AG04450 (cell line): ENCODE measurements at regions of chr1 and their contacts with region 1.

Region 1: DNA sequence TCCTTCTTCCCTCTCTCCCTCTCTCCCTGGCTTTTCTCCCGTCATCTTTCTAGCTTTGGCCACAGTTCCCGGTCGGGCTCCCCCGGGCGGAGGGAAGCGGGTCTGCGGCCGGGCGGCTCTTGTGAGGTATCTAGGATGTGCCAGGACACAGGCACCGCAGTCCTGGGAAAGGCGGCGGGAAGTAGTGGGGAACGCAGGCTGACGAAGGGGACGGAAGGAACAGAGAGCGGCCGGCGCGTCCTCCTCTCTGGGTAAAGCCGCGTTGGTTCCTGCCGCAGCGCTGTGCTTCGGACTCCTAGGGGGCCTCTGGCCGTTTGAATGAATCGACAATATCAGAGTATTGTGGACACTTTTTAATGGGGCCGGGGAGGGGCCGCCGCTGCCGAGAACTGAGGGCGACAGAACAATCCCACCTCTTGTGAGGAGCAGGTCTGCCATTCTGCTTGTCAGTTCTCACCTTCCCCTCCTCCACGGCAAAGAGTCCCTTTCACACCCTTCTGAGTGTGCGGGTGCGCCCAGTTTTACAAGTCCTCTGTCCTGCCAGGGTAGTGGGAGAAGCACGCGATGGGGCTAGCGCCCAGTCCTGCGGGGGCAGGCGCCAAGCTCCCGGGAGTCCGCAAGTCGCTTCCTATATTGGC is 1.2 kb upstream of the LHX9 start:
- DNase-seq: no peak
- H3K4me3 ChIP-seq: peak overlapping the region; percentile 47
- H3K27ac ChIP-seq: no peak overlapping the region
- H3K27me3 ChIP-seq: peaks cover 98% of the 10 kb centered on the region
- CTCF ChIP-seq: peak; percentile 76

Region 2: DNA sequence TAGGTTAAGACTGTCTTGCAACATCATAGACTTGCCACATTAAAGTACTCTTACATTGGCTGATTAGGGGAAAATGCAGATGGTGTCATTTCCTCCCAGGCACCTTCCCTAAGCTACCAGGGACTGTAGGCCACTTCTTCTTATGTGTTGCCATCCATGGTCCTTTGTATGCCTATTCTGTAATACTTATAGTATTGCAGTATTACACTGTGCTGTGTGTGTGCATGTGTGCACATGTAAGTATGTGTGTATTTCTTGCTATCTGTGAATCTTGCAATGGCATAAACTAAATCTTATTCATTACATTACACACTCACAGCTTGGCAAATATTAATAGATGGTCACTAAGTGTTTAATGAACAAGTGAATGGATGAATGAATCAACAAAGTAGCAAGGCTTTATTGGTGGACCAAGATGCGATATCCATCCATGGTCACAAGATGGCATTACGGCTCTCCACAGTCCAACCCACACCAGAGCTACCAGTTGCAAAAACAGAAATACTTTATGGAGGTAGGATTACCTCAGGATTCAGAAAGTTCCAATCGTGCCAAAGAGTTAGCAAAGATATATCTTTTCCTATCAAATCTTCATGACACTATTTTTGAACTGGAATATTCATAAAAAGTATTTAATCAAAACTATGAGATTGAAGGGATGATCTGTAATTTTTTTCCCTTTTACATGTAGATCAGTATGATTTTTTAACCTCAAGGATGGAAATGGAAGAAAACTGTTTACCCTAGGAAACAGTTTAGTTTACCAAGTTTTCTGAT is 300.9 kb before region 1 on chr1:
- CTCF ChIA-PET with region 1: interaction called, 38 read pairs
- POLR2A ChIA-PET with region 1: no interaction called
- DNase-seq: peak; percentile 15
- H3K4me3 ChIP-seq: no peak overlapping the region
- H3K27ac ChIP-seq: no peak overlapping the region
- H3K27me3 ChIP-seq: no peaks in the 10 kb centered on the region
- CTCF ChIP-seq: peak; percentile 71

Region 3: DNA sequence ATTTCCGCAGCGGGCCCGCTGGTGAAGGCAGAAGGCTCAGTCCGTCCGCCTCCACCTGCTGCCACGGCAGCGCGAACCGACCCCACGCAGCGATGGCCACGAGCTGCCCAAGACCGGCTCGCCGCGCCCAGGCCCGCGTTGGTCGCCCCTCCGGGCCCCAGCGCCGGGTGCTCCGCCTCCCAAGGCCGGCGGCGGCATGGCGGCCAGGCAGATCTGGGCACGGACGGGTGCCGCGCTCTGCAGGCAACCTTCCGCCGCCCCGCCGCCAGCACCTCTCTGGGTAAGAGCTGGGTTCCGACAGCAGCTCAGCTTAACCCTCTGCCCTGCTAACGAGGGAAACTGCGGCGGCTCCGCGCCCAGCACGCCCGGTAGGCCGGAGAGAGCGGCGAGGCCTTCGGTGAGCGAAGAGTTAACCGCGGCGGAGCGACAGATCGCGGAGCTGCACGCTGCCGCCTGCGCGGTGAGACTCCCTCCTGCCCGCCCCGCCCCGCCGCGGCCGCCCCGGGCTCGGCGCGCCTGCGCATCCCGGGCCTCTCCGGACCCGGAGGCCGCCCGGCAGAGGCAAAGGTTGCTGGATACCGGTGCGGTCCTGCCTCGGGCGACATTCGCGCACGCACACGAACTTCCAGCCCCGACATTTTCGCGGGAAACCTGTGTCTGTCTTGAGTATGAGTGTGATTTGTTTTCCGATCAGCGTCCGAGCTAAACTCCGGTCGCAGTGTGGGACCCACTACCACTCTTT is 13.4 kb before region 1 on chr1 and contains the start of gene C1orf53:
- CTCF ChIA-PET with region 1: interaction called, 28 read pairs
- POLR2A ChIA-PET with region 1: interaction called, 4 read pairs
- DNase-seq: peak; percentile 61
- H3K4me3 ChIP-seq: peak within 1 kb of the TSS; percentile 87
- H3K27ac ChIP-seq: peak within 1 kb of the TSS; percentile 77
- H3K27me3 ChIP-seq: peaks cover 6% of the 10 kb centered on the region
- CTCF ChIP-seq: no peak
- polyA plus RNA-seq, gene C1orf53: 6.2 and 6.4 TPM in 2 replicates

Region 4: DNA sequence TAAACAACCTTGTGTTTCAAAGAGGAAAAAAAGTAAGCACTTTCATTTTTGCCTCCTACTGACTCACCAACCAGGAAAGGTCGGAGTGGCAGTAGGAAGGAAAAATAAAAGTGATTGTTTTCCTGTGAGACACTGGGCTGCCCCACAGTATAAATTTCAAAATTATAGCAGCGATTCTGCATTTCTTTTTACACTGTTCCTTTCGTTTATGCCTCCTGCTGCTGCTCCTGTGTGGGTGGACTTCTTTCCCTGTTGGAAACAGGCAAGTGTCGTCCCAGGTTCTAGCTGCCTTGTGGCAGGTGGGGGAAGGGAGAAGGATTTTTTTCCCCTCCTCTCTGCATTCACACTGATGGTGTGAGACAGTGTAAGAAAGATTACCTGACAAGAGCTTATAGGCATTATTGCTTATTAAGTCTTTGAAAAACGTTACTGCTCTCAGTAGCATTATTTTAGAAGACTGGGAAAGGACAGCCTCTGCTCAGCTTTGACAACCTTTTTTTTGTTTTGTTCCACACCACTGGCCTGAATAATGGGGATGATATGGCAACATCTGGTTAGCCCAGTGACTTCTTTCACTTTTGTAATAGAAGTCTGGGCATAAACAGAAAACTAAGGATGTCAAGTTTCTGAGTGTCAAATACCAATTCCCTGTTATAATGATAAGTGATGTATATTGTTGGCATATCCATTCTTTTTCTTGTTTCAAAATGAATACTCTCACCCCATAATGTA is 318.7 kb after region 1 on chr1:
- CTCF ChIA-PET with region 1: no interaction called
- POLR2A ChIA-PET with region 1: no interaction called
- DNase-seq: no peak
- H3K4me3 ChIP-seq: peak overlapping the region; percentile 49
- H3K27ac ChIP-seq: peak overlapping the region; percentile 63
- H3K27me3 ChIP-seq: no peaks in the 10 kb centered on the region
- CTCF ChIP-seq: no peak